ENCODE measurements at regions of chr9 and their contacts with region 1.

Region 1: DNA sequence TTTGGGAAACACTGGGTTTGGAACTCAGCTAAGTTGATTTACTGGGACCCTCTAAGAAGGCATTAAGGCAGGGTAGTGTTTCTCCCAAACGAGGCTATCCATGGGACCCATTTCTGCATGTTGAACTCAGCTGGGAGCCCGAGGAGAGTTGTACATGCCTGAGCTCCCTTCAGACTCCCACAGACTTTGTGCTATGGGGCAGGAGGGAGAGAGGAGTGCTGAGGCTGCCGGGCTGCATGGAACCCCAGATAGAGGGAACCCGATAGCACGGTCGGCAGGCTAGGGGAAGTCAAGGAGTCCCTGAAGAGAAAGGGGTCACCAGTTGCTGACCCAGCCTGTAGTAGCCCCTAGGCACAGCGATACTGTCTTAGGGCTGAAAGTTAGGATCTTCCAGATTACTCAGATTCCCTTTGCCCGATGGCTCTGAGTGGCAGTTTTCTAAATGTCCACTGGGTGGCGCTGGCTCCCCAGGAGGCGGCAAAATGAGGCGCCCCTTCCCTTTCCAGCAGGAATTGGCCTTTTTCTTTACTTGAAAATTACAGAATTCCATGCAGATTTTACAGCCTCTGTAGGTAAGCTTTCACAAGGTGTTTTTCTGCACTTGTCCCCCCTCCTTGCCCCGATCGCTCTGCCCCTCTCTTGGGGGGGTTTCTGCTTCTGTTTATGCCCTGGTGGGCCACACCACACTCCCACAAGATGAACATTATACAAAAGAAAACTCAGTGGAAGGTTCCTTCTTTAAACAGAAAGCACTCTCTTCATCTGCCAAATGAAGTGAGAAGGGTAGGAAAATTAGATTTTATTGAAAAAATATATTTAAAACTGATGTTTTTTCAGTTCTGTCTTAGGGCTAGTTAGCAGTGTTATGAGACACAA is 17.8 kb downstream of the NANS start:
- DNase-seq: peak; percentile 36 to 85 (median 71)
- ATAC-seq: peak; percentile 34
- H3K4me3 ChIP-seq: no peak overlapping the region
- H3K4me3 Mint-ChIP-seq: peak overlapping the region; percentile 69
- H3K27ac ChIP-seq: peak overlapping the region; percentile 54 to 80
- H3K27ac Mint-ChIP-seq: peak overlapping the region; percentile 97
- H3K4me1 ChIP-seq: peaks cover 31% of the 10 kb centered on the region
- H3K4me1 Mint-ChIP-seq: peaks cover 42% of the 10 kb centered on the region
- H3K27me3 ChIP-seq: no peaks in the 10 kb centered on the region
- H3K27me3 Mint-ChIP-seq: no peaks in the 10 kb centered on the region
- CTCF ChIP-seq: peak; percentile 98

Region 2: GRCh38 chr9:98087420-98088354 is 13.3 kb after region 1 on chr9:
- CTCF ChIA-PET with region 1: interaction called, 15 read pairs
- POLR2A ChIA-PET with region 1: no interaction called
- intact Hi-C with region 1: no loop called
- DNase-seq: peak in 7 of 9 experiments; percentile 20 to 65 (median 49)
- ATAC-seq: peak; percentile 59
- H3K4me3 ChIP-seq: no peak overlapping the region
- H3K4me3 Mint-ChIP-seq: no peak overlapping the region
- H3K27ac ChIP-seq: no peak overlapping the region
- H3K27ac Mint-ChIP-seq: no peak overlapping the region
- H3K4me1 ChIP-seq: peaks cover 2% of the 10 kb centered on the region
- H3K4me1 Mint-ChIP-seq: peaks cover 37% of the 10 kb centered on the region
- H3K27me3 ChIP-seq: no peaks in the 10 kb centered on the region
- H3K27me3 Mint-ChIP-seq: no peaks in the 10 kb centered on the region
- CTCF ChIP-seq: no peak

Region 3: DNA sequence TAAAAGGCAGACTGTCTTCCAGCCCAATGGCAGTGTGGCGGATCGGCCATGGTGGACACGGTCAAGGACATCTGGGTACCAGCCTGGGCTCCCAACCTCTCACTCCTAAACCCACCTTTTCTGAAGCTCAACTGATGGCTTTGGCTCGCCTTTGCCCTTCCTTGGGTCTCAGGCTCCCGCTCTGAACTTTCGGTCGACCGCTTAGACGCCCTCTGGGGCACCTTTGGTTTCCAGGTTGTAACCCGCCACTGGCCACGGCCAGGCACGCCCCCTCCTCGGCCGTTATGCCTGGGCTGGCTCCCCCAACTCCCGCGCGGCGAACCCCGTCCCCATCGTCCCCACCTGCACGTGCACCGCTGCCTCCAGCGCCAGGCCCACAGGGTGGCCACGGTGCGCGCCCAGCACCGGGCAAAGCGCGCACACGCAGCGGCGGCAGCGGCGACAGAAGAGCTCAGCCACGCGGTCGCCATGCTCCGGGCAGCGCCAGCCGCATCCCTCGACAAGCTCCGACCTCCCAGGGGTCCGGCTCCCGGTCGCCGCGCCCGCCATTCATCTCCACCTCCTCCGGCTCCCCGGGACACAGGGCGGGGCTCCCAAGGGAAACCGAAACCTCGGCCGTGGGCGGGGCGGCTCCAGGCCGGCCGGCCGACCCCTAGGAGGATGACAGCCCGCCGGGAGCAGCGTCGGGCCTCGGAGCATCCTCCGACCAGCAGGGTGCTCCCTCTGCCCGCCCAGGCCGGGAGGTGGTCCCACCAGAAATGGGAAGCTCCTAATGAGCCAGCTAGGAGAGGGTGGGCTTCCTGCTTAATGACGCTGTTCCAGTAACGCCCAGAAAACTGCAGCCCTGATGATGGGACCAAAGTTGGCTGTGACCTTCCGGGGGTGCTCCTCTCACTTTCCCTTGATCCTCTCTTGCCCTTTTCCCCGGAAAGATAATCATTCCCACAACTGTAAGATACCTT is 44.6 kb after region 1 on chr9 and contains the start of gene TRIM14:
- CTCF ChIA-PET with region 1: interaction called, 31 read pairs
- POLR2A ChIA-PET with region 1: interaction called, 5 read pairs
- intact Hi-C with region 1: loop called (anchors 1 to 2 kb)
- DNase-seq: peak in 8 of 9 experiments; percentile 31 to 77 (median 60)
- ATAC-seq: peak; percentile 51
- H3K4me3 ChIP-seq: peak within 1 kb of the TSS; percentile 56 to 72
- H3K4me3 Mint-ChIP-seq: peak within 1 kb of the TSS; percentile 86
- H3K27ac ChIP-seq: peak within 1 kb of the TSS; percentile 71 to 92
- H3K27ac Mint-ChIP-seq: peak within 1 kb of the TSS; percentile 97
- H3K4me1 ChIP-seq: peaks cover 48% of the 10 kb centered on the region
- H3K4me1 Mint-ChIP-seq: peaks cover 54% of the 10 kb centered on the region
- H3K27me3 ChIP-seq: no peaks in the 10 kb centered on the region
- H3K27me3 Mint-ChIP-seq: no peaks in the 10 kb centered on the region
- CTCF ChIP-seq: no peak
- total RNA-seq, gene TRIM14: 22.6 to 23.5 TPM

Region 4: GRCh38 chr9:98202252-98202651 is 127.9 kb after region 1 on chr9:
- CTCF ChIA-PET with region 1: interaction called, 34 read pairs
- POLR2A ChIA-PET with region 1: no interaction called
- intact Hi-C with region 1: loop called (anchors 1 kb)
- DNase-seq: no peak
- ATAC-seq: no peak
- H3K4me3 ChIP-seq: no peak overlapping the region
- H3K4me3 Mint-ChIP-seq: no peak overlapping the region
- H3K27ac ChIP-seq: no peak overlapping the region
- H3K27ac Mint-ChIP-seq: no peak overlapping the region
- H3K4me1 ChIP-seq: no peaks in the 10 kb centered on the region
- H3K4me1 Mint-ChIP-seq: peaks cover 5% of the 10 kb centered on the region
- H3K27me3 ChIP-seq: no peaks in the 10 kb centered on the region
- H3K27me3 Mint-ChIP-seq: no peaks in the 10 kb centered on the region
- CTCF ChIP-seq: no peak

Region 5: DNA sequence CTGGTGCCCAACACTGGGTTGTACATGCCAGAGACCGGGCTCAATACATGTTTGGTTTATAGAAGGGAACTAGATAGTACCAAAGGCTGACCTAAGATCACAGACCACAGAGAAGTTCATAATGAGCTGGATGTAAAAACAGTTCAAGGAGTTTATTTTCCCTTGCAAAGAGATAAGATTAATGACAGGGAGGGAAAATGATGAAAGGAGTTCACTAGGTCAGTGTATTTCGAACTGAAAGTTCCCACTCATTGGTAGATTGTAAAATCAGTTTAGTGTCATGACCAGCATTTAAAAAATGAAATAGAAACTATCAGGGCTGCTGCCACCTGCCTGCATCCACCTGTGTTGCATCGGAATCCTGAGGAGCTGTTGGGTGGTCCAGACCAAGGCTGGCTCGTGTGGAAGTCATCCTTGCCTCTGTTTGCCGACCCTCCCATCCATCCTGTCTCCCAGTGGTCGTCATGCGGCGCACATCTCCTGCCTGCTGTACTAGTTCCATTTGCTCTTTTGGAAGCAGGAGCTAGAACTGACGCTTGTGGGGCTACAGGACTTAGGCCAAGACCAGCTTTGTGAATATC is 160.0 kb after region 1 on chr9:
- CTCF ChIA-PET with region 1: interaction called, 9 read pairs
- POLR2A ChIA-PET with region 1: no interaction called
- intact Hi-C with region 1: loop called in 1 of 2 experiments (anchors 1 kb)
- DNase-seq: peak in 1 of 9 experiments; percentile 18
- ATAC-seq: no peak
- H3K4me3 ChIP-seq: no peak overlapping the region
- H3K4me3 Mint-ChIP-seq: no peak overlapping the region
- H3K27ac ChIP-seq: no peak overlapping the region
- H3K27ac Mint-ChIP-seq: no peak overlapping the region
- H3K4me1 ChIP-seq: no peaks in the 10 kb centered on the region
- H3K4me1 Mint-ChIP-seq: no peaks in the 10 kb centered on the region
- H3K27me3 ChIP-seq: no peaks in the 10 kb centered on the region
- H3K27me3 Mint-ChIP-seq: no peaks in the 10 kb centered on the region
- CTCF ChIP-seq: no peak